ENCODE measurements at regions of chr7 and their contacts with region 1.

Region 1: GRCh38 chr7:105652359-105652993 is 71.2 kb upstream of the EFCAB10 start:
- DNase-seq: no peak
- H3K4me3 ChIP-seq: no peak overlapping the region
- H3K27ac ChIP-seq: no peak overlapping the region
- H3K4me1 ChIP-seq: peaks cover 76% of the 10 kb centered on the region
- H3K27me3 ChIP-seq: no peaks in the 10 kb centered on the region
- CTCF ChIP-seq: peak; percentile 68 to 90 (median 84)
- POLR2A ChIP-seq: no peak

Region 2: DNA sequence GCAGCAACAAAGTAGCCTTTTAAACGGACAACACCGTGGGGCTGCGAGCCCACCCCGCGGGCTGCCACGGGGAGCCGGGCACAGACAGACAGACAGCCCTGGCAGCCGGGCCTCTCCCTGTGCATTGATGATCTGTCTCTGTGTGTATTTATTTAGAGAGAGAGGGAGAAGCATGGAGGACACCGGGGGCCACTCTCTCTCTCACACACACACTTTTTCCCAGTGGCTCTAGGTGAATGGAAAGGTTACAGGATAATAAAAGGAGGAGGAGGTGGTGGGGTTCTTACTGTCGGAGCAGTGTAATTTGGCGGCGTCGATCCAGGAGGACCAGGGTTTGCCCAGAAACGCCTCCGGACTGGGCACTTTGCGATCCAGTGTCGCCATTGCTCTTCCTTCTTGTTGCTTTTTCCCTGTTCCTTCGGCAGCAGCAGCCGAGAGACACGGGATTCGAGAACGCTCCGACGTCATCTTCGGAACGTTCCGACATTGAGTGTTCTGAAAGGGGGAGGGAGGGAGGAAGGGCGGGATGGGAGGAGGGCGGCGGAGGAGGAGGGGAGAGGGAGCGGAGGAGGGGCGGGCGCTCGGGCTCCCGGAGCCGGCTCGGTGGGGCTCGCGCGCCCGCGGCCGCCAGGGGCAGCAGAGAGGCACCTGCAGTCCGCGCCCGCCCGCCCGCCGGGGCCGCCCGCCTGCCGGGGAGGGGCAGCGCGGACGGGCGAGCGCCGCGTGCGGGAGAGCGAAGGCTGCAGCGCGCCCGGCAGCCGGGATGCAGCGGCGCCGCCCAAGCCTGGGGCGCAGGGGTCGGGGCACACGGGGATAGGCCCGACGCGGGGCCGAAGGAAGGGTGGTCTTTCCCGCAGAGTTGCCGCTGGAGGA is 223.9 kb after region 1 on chr7 and contains the start of gene ATXN7L1:
- intact Hi-C with region 1: loop called (anchors 5 kb)
- DNase-seq: peak in 1 of 2 donors; percentile 96
- H3K4me3 ChIP-seq: peak within 1 kb of the TSS; percentile 79 to 89
- H3K27ac ChIP-seq: peak within 1 kb of the TSS; percentile 91
- H3K4me1 ChIP-seq: peaks cover 28% of the 10 kb centered on the region
- H3K27me3 ChIP-seq: no peaks in the 10 kb centered on the region
- CTCF ChIP-seq: peak in 1 of 3 experiments; percentile 56
- POLR2A ChIP-seq: peak in 1 of 2 donors; percentile 70
- total RNA-seq, gene ATXN7L1: 16.2 TPM

Measured in vagina (tissue), 2 donors.